ENCODE measurements at regions of chr17 and their contacts with region 1.

Region 1: GRCh38 chr17:4903051-4903818 is at the start of gene CHRNE:
- DNase-seq: peak; percentile 61 to 63
- ATAC-seq: peak; percentile 64 to 76 (median 70)
- H3K4me3 ChIP-seq: no peak within 1 kb of the TSS
- H3K27ac ChIP-seq: no peak within 1 kb of the TSS
- H3K4me1 ChIP-seq: peaks cover 10% of the 10 kb centered on the region
- H3K27me3 ChIP-seq: peaks cover 0 to 16% (median 0%) of the 10 kb centered on the region in 3 donors
- CTCF ChIP-seq: peak; percentile 85
- total RNA-seq, gene CHRNE: 0.19 to 1.1 (median 0.28) TPM

Region 2: DNA sequence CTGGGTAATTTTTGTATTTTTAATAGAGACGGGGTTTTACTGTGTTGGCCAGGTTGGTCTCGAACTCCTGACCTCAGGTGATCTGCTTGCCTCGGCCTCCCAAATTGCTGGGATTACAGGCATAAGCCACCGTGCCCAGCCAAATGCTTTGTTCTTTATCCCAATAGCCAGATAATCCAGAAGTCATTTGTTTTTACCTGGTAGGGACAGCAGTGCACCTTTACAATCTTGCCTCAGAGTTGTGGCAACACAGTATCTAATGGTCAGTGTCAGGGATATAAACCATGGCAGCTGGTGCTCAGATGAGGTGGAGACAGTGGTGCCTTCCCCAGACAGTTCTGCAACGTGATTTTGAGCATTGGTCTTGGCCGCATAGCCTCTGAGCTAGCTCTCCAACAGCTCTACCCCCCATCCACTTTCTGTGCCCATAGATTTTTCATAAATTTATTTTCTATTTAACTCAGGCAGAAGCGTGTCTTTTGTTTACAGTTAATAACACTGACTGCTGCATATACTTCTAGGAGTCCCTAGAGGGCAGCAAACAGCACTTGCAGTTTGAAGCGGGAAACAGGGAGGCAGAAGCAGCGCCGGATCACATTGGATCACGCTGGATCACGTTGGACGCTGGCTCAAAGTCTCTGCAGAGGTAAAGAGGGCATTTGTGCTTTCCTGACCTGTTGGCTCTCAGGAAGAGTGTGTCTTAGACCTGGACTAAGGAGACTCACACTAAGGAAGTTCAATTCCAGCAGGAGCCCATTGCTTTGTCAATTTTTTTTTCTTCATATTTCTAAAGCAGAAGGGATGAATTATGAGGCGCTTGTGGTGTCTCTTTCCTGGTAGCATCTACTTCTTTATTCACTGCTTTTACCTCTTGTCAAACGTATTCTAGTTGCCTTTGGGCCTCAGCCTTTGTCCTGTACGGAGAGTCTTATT is 337.8 kb before region 1 on chr17:
- intact Hi-C with region 1: loop called in 1 of 2 experiments (anchors 10 kb)
- DNase-seq: peak; percentile 60 to 78
- ATAC-seq: peak; percentile 86 to 94 (median 89)
- H3K4me3 ChIP-seq: no peak overlapping the region
- H3K27ac ChIP-seq: no peak overlapping the region
- H3K4me1 ChIP-seq: peaks cover 9% of the 10 kb centered on the region
- H3K27me3 ChIP-seq: no peaks in the 10 kb centered on the region
- CTCF ChIP-seq: peak; percentile 77

Region 3: GRCh38 chr17:4709794-4710692 is 193.2 kb before region 1 on chr17 and contains the start of gene ARRB2:
- intact Hi-C with region 1: loop called in 1 of 2 experiments (anchors 5 kb)
- DNase-seq: peak; percentile 99
- ATAC-seq: peak; percentile 93 to 97 (median 94)
- H3K4me3 ChIP-seq: peak within 1 kb of the TSS; percentile 72
- H3K27ac ChIP-seq: peak within 1 kb of the TSS; percentile 54
- H3K4me1 ChIP-seq: peaks cover 15% of the 10 kb centered on the region
- H3K27me3 ChIP-seq: no peaks in the 10 kb centered on the region
- CTCF ChIP-seq: peak; percentile 56
- total RNA-seq, gene ARRB2: 12.1 to 16.5 (median 14.7) TPM

Region 4: DNA sequence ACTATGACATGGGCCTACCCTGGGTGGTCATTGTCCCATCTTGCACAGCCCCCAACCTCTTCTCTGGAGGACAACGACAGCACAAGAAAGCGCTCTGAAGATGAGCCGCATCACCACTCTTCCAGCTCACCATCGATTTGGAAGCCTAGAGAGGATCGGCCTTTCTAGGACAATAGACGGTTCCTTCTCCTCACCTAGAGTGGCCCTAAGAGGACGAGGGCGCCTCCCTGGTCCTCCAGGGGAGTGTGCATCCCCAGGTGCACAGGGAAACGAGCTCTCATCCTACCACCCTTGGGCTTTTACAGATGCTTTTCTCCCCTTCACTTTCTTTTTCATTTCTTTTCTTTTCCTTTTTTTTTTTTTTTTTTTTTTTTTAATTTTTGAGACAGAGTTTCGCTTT is 152.3 kb after region 1 on chr17:
- intact Hi-C with region 1: loop called in 1 of 2 experiments (anchors 5 kb)
- DNase-seq: no peak
- ATAC-seq: no peak
- H3K4me3 ChIP-seq: no peak overlapping the region
- H3K27ac ChIP-seq: no peak overlapping the region
- H3K4me1 ChIP-seq: no peaks in the 10 kb centered on the region
- H3K27me3 ChIP-seq: no peaks in the 10 kb centered on the region
- CTCF ChIP-seq: no peak